Esophagus muscularis mucosa (tissue), 4 donors: ENCODE measurements at regions of chr2 and their contacts with region 1.

Region 1: GRCh38 chr2:53820711-53821110 is 33.9 kb downstream of the ERLEC1 start:
- DNase-seq: no peak
- H3K4me3 ChIP-seq: no peak overlapping the region
- H3K27ac ChIP-seq: no peak overlapping the region
- H3K4me1 ChIP-seq: peaks cover 0 to under 1% (median under 1%) of the 10 kb centered on the region in 4 donors
- H3K27me3 ChIP-seq: no peaks in the 10 kb centered on the region
- CTCF ChIP-seq: no peak
- EP300 ChIP-seq: no peak
- POLR2A ChIP-seq: no peak

Region 2: GRCh38 chr2:53859206-53860181 is 38.8 kb after region 1 on chr2 and contains the start of gene GPR75:
- intact Hi-C with region 1: loop called (anchors 5 kb)
- DNase-seq: no peak
- H3K4me3 ChIP-seq: peak within 1 kb of the TSS; percentile 48 to 66 (median 55)
- H3K27ac ChIP-seq: peak within 1 kb of the TSS in 3 of 4 donors; percentile 11 to 51 (median 48)
- H3K4me1 ChIP-seq: peaks cover 4 to 26% (median 18%) of the 10 kb centered on the region in 4 donors
- H3K27me3 ChIP-seq: no peaks in the 10 kb centered on the region
- CTCF ChIP-seq: no peak
- EP300 ChIP-seq: no peak
- POLR2A ChIP-seq: no peak
- total RNA-seq, gene GPR75: 1.2 to 4.6 (median 2.8) TPM